T-cell (primary cell): ENCODE measurements at regions of chr5 and their contacts with region 1.

Region 1: GRCh38 chr5:32471784-32472183 is 27.2 kb upstream of the ZFR start:
- DNase-seq: no peak
- ATAC-seq: no peak
- H3K4me3 ChIP-seq: no peak overlapping the region
- H3K4me3 Mint-ChIP-seq: no peak overlapping the region
- H3K27ac ChIP-seq: no peak overlapping the region
- H3K27ac Mint-ChIP-seq: no peak overlapping the region
- H3K4me1 ChIP-seq: no peaks in the 10 kb centered on the region
- H3K4me1 Mint-ChIP-seq: no peaks in the 10 kb centered on the region
- H3K27me3 ChIP-seq: no peaks in the 10 kb centered on the region
- H3K27me3 Mint-ChIP-seq: no peaks in the 10 kb centered on the region

Region 2: DNA sequence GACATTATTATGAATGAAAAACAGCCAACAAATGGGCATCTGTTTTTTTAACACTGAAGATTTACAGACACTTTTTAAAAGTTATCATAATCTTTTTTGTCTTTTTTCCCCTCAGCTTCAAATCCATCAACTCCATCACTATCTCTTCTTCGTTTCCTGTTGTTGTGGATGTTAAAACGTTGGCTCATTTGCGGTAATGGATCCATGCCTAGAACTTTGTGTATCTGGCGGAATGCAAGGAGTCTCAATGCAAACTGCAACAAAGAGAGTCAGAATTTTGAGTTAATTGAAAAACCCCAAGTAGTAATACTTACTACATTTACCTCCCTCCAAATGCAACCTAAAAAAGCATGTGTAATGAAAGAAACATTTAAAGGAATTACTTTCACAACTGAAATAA is 116.1 kb before region 1 on chr5:
- CTCF ChIA-PET with region 1: no interaction called
- POLR2A ChIA-PET with region 1: no interaction called
- DNase-seq: no peak
- ATAC-seq: no peak
- H3K4me3 ChIP-seq: no peak overlapping the region
- H3K4me3 Mint-ChIP-seq: no peak overlapping the region
- H3K27ac ChIP-seq: no peak overlapping the region
- H3K27ac Mint-ChIP-seq: peak overlapping the region in 1 of 2 donors; percentile 52
- H3K4me1 ChIP-seq: no peaks in the 10 kb centered on the region
- H3K4me1 Mint-ChIP-seq: no peaks in the 10 kb centered on the region
- H3K27me3 ChIP-seq: no peaks in the 10 kb centered on the region
- H3K27me3 Mint-ChIP-seq: no peaks in the 10 kb centered on the region

Region 3: DNA sequence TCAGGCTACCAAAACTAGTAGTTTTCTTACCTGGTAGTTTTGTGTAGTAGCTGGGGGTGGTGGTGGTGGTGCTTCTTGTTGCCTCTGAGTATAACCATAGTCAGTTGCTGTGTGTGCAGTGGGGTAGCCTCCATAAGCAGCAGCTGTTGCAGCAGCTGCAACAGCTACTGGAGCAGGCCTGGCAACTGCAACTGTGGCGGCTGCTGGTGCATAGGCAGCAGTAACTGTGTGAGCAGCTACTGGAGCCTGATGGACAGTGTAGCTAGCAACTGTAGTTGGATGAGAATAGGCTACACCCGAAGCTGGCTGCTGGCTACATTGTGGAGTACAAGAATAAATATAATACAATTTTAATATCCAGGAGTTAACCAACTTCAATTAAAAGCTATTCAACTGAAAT is 52.0 kb before region 1 on chr5:
- CTCF ChIA-PET with region 1: interaction called in 1 of 2 experiments, 3 read pairs
- POLR2A ChIA-PET with region 1: interaction called in 1 of 2 experiments, 12 read pairs
- DNase-seq: no peak
- ATAC-seq: no peak
- H3K4me3 ChIP-seq: no peak overlapping the region
- H3K4me3 Mint-ChIP-seq: no peak overlapping the region
- H3K27ac ChIP-seq: no peak overlapping the region
- H3K27ac Mint-ChIP-seq: no peak overlapping the region
- H3K4me1 ChIP-seq: peaks cover 0 to 3% of the 10 kb centered on the region in 2 experiments
- H3K4me1 Mint-ChIP-seq: peaks cover 43 to 56% (median 49%) of the 10 kb centered on the region in 3 donors
- H3K27me3 ChIP-seq: no peaks in the 10 kb centered on the region
- H3K27me3 Mint-ChIP-seq: no peaks in the 10 kb centered on the region

Region 4: DNA sequence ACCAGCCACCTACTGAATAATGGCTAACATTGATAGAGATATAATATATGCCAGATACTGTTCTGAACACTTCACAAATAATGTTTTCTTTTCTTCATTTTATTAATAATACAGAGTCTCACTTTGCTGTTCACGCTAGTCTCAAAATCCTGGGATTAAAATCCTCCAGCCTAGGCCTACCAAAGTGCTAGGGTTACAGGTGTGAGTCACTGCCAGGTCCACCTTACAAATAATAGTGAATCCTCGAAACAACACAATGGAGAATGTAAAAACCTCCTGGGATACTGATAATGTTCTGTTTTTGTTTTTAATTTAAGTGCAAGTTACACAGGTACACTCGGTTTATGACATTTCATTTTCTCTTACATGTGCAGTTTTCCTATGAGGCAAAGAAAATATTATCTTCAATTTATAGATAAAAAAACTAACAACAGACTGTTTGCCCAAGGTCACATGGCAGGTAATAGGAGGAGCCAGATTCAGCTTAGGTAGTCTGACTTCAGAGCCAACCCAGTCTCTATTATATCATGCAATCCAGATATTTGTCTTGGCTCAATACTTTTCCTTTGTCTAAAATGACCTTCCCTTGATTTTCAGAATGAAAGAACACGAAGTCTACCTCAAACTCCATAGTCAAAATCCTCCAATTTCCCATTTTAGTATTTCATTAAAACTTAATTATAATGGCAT is 35.1 kb before region 1 on chr5:
- CTCF ChIA-PET with region 1: no interaction called
- POLR2A ChIA-PET with region 1: no interaction called
- DNase-seq: no peak
- ATAC-seq: no peak
- H3K4me3 ChIP-seq: no peak overlapping the region
- H3K4me3 Mint-ChIP-seq: no peak overlapping the region
- H3K27ac ChIP-seq: no peak overlapping the region
- H3K27ac Mint-ChIP-seq: no peak overlapping the region
- H3K4me1 ChIP-seq: peaks cover 2 to 21% of the 10 kb centered on the region in 2 experiments
- H3K4me1 Mint-ChIP-seq: peaks cover 74 to 83% (median 78%) of the 10 kb centered on the region in 3 donors
- H3K27me3 ChIP-seq: no peaks in the 10 kb centered on the region
- H3K27me3 Mint-ChIP-seq: no peaks in the 10 kb centered on the region

Region 5: DNA sequence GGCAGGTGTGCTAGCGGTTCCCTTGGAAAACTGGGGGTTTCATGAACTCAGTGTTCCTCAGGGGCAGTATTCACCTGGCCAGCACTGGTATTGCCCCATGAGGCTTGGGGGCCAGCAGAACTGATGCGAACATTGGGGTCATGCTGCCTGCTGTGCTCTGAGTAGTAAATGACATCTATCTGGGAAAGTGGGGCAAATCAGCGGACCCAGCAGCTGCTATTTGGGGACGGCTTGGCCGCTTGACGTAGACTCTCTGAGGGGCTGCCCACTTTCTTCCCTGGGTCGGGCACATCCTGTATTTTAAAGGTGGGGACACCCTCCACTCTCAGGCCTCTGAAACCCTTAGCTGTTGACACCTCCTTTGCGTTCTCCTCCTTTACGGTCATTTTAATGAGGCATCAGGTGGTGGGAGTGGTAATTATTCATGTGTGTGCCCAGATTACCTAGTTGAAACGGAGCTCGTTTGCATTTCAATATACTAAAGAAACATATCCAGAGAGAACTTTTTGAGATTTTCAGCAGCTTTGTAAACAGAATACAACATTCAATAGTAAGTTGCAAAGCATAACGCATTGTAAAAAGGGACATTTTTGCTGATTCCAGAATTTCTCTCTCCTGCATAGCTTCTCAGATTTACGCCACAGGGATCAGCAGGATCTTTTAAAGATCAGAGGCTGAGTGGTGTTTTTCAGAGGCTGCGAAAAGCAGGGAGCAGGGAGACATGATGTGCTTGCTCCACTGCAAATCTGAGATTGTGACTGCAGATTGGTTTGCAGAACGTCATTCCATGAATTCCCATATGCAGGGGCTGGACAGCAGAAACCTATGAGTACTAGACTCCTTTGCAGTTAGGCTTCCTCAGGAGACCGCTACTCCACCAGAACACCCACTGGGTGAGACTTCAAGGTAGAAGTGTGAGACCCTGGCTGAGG is 29.6 kb after region 1 on chr5:
- CTCF ChIA-PET with region 1: no interaction called
- POLR2A ChIA-PET with region 1: no interaction called
- DNase-seq: no peak
- ATAC-seq: no peak
- H3K4me3 ChIP-seq: no peak overlapping the region
- H3K4me3 Mint-ChIP-seq: no peak overlapping the region
- H3K27ac ChIP-seq: no peak overlapping the region
- H3K27ac Mint-ChIP-seq: no peak overlapping the region
- H3K4me1 ChIP-seq: peaks cover 3 to 13% of the 10 kb centered on the region in 2 experiments
- H3K4me1 Mint-ChIP-seq: peaks cover 17 to 27% (median 18%) of the 10 kb centered on the region in 3 donors
- H3K27me3 ChIP-seq: peaks cover 0 to 4% of the 10 kb centered on the region in 2 experiments
- H3K27me3 Mint-ChIP-seq: peaks cover 0 to 9% of the 10 kb centered on the region in 2 donors